Activated B cell treated with CpG ODN at 0.5 μM for 24 hours (primary cell): ENCODE measurements at regions of chr20 and their contacts with region 1.

Region 1: GRCh38 chr20:20568604-20569205 is 143.7 kb downstream of the RALGAPA2 start:
- DNase-seq: no peak
- ATAC-seq: peak; percentile 34
- H3K4me3 Mint-ChIP-seq: no peak overlapping the region
- H3K27ac Mint-ChIP-seq: no peak overlapping the region
- H3K4me1 Mint-ChIP-seq: peaks cover 2% of the 10 kb centered on the region
- H3K27me3 Mint-ChIP-seq: no peaks in the 10 kb centered on the region
- CTCF ChIP-seq: no peak

Region 2: DNA sequence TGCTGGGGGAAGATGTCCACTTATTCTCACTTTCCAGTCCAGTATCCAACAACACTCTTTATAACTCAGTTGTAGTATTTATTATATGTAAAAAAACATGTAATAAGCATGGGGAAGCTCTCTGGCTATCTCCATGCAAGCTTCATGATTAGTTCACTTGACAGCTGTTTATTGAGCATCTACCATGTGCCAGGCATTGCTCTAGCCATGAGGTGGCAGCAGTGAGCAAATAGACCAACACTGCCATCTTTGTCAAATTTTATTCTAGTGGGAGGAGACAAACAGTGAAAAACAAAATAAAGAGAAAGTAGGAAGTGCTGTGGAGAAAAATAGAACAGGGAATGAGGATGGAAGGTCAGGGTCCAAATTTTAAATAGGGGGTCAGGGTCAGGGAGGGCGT is 384.6 kb before region 1 on chr20:
- CTCF ChIA-PET with region 1: no interaction called
- POLR2A ChIA-PET with region 1: no interaction called
- intact Hi-C with region 1: loop called (anchors 1 kb)
- DNase-seq: no peak
- ATAC-seq: no peak
- H3K4me3 Mint-ChIP-seq: no peak overlapping the region
- H3K27ac Mint-ChIP-seq: no peak overlapping the region
- H3K4me1 Mint-ChIP-seq: no peaks in the 10 kb centered on the region
- H3K27me3 Mint-ChIP-seq: peaks cover 5% of the 10 kb centered on the region
- CTCF ChIP-seq: no peak

Region 3: GRCh38 chr20:20435453-20435852 is 133.3 kb before region 1 on chr20:
- CTCF ChIA-PET with region 1: no interaction called
- POLR2A ChIA-PET with region 1: no interaction called
- intact Hi-C with region 1: loop called (anchors 5 kb)
- DNase-seq: no peak
- ATAC-seq: no peak
- H3K4me3 Mint-ChIP-seq: no peak overlapping the region
- H3K27ac Mint-ChIP-seq: no peak overlapping the region
- H3K4me1 Mint-ChIP-seq: no peaks in the 10 kb centered on the region
- H3K27me3 Mint-ChIP-seq: no peaks in the 10 kb centered on the region
- CTCF ChIP-seq: no peak

Region 4: GRCh38 chr20:20549718-20550117 is 19.0 kb before region 1 on chr20:
- CTCF ChIA-PET with region 1: no interaction called
- POLR2A ChIA-PET with region 1: no interaction called
- intact Hi-C with region 1: no loop called
- DNase-seq: no peak
- ATAC-seq: no peak
- H3K4me3 Mint-ChIP-seq: no peak overlapping the region
- H3K27ac Mint-ChIP-seq: no peak overlapping the region
- H3K4me1 Mint-ChIP-seq: peaks cover 13% of the 10 kb centered on the region
- H3K27me3 Mint-ChIP-seq: no peaks in the 10 kb centered on the region
- CTCF ChIP-seq: no peak

Region 5: DNA sequence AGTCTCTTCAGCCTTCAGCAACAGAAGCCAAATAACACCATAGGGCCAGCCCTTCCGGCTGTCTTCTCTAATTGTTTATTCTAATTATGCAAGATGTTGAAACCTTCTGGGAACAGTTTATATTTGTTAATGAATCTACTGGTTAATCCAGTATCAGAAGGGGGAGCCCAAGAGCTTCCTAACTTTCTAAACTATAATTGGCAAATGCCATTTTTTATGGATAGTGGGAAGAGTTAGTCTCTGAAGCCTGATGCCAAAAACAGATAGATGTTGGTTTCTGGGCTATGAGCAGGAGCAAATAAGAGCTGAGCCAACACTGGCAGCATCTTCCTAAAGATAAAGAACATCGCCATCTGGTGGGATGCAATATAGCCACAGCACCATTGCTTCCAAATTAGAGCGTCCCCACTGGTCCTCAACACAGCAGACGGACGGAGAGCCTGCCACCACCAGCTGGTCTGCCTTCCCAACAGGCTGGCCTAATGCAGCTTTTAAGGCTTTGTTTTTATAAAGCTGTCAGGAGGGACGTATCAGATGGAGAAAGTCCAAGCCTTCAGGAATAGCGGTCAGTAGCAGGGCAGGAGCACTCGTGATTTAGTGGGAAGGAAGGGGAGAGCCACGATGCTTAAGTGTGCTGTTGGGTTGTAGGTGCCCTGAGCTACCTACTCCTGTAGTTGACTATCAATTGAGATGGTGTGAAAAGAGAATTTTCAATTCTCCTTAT is 24.9 kb after region 1 on chr20:
- CTCF ChIA-PET with region 1: no interaction called
- POLR2A ChIA-PET with region 1: no interaction called
- intact Hi-C with region 1: no loop called
- DNase-seq: no peak
- ATAC-seq: no peak
- H3K4me3 Mint-ChIP-seq: no peak overlapping the region
- H3K27ac Mint-ChIP-seq: no peak overlapping the region
- H3K4me1 Mint-ChIP-seq: no peaks in the 10 kb centered on the region
- H3K27me3 Mint-ChIP-seq: no peaks in the 10 kb centered on the region
- CTCF ChIP-seq: no peak